K562 (cell line): ENCODE measurements at regions of chr3 and their contacts with region 1.

Region 1: DNA sequence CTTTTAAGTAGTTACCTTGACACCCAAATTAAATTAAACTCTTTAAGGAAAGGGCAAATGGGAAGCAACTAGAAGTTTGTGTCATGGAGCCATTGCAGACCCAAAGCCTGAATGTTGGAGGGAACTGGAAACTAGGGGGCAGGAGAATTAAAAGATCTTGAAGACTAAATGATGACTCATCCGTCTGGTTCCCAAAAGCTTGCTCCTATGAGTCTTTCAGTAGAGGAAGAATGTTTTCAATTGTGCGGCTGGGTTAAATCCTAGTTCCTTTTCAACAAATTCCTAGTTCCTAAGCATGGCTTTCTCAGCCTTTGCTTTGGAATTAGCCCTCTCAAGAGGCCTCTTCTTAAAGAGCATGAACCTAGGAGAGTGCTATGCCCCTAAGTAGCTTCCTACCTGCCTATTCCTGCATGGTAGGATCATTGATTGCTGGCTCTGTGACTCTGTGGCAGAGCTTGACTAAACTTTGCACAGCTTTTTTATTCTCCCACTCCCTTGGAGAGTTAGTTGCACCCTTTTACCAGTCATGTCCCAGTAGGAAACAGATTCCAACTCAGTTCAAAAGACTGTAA is 17.7 kb downstream of the CLEC3B start:
- DNase-seq: peak; percentile 47 to 82 (median 68)
- ATAC-seq: peak; percentile 64
- H3K4me3 ChIP-seq: no peak overlapping the region
- H3K27ac ChIP-seq: peak overlapping the region; percentile 12; the same call in 1 of the 3 replicates
- H3K4me1 ChIP-seq: peaks cover 8 to 45% of the 10 kb centered on the region in 2 experiments; a peak in 4 of 5 replicates
- H3K27me3 ChIP-seq: no peaks in the 10 kb centered on the region
- CTCF ChIP-seq: peak; percentile 27 to 69 (median 34); a peak in 4 of 6 replicates
- EP300 ChIP-seq: peak; percentile 49; the same call in 1 of the 2 replicates
- POLR2A ChIP-seq: no peak
- RAD21 ChIP-seq: peak; percentile 52 to 81; a peak in 3 of 4 replicates

Region 2: DNA sequence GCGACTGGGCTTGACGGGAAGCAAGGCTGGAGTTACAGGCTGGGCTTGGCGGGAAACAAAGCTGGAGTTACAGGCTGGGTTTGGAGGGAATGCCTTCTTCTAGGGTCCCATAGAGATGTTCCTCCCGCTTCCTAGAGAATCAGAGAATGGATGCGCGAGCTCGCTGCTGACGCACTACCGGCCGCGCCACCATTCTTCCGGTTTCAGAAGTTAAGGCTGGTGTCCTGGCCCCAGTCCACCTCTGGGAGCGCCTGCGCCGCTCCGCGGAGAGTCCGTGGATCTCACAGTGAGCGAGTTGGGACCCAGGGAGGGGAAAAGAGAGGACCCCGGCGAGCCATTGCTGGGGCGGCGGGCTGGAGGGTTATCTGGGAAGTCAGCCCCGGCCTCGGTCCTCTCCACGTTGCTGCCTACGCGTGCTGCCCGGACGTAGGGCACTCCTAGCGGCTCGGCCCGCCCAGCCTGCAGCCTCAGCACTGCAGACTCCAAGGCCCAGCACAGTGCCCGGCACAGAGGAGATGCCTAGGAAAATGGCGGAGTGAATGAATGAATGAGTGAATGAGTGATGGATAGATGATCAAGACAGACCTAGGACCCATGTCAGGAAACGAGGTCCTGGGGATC is 331.2 kb before region 1 on chr3 and contains the start of gene ZNF502:
- CTCF ChIA-PET with region 1: no interaction called
- POLR2A ChIA-PET with region 1: no interaction called
- in situ Hi-C with region 1: no loop called
- intact Hi-C with region 1: no loop called
- DNase-seq: peak; percentile 44 to 76 (median 64)
- ATAC-seq: peak; percentile 99
- H3K4me3 ChIP-seq: peak within 1 kb of the TSS; percentile 46
- H3K27ac ChIP-seq: no peak within 1 kb of the TSS; the same call in 2 of the 3 replicates
- H3K4me1 ChIP-seq: peaks cover 0 to 7% of the 10 kb centered on the region in 2 experiments; a peak in 1 of 5 replicates
- H3K27me3 ChIP-seq: peaks cover 14 to 25% of the 10 kb centered on the region in 2 experiments; a peak in 4 of 5 replicates
- CTCF ChIP-seq: peak; percentile 30 to 44 (median 34); a peak in 5 of 6 replicates
- EP300 ChIP-seq: no peak
- POLR2A ChIP-seq: no peak
- RAD21 ChIP-seq: no peak
- polyA plus RNA-seq, gene ZNF502: 0.38 to 0.67 TPM

Region 3: DNA sequence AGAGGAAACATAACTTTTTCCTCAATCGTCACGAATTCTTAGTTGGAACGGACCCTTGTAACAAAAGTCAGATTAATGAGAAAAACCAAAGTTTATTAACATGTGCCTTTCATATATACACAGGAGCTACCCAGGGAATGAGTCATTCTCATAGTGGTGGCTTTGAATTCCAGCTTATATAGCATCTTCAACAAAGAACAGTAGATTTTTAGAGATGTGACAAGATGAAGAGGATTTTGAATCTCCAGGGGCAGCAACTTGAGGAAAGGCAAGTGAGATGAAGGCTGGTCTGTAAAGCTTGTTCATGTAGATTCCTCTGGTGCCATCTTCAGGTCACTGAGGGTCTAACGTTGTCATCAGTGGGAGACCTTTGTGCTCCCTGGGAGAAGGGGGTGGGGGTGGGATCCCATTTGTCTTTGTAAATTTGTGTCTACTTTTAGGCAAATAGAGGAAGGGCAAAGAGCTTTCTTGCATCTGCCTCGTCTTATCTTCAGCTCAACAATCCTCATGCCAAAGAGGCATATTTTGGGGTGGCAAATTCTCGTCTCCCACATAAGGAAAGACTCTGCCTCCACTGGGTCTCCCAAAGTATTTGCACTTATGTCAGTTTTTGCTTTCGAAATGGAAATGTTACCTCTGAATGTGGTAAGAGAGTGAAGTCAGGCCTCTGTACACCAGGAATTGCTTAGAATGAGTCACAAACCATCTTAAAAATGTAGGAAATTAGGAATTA is 11.8 kb after region 1 on chr3:
- CTCF ChIA-PET with region 1: no interaction called
- POLR2A ChIA-PET with region 1: interaction called, 32 read pairs
- in situ Hi-C with region 1: no loop called
- intact Hi-C with region 1: loop called (anchors 1 kb)
- DNase-seq: peak; percentile 58 to 89 (median 68)
- ATAC-seq: peak; percentile 82
- H3K4me3 ChIP-seq: no peak overlapping the region
- H3K27ac ChIP-seq: peak overlapping the region; percentile 32; the same call in 2 of the 3 replicates
- H3K4me1 ChIP-seq: peaks cover 21 to 74% of the 10 kb centered on the region in 2 experiments
- H3K27me3 ChIP-seq: no peaks in the 10 kb centered on the region
- CTCF ChIP-seq: peak; percentile 64 to 82 (median 73); a peak in 5 of 6 replicates
- EP300 ChIP-seq: no peak
- POLR2A ChIP-seq: no peak
- RAD21 ChIP-seq: peak; percentile 72 to 79

Region 4: GRCh38 chr3:45092132-45093031 is 48.6 kb after region 1 on chr3:
- CTCF ChIA-PET with region 1: interaction called, 3 read pairs
- POLR2A ChIA-PET with region 1: interaction called, 5 read pairs
- in situ Hi-C with region 1: no loop called
- intact Hi-C with region 1: loop called (anchors 1 kb)
- DNase-seq: peak; percentile 61 to 95 (median 77)
- ATAC-seq: peak; percentile 85
- H3K4me3 ChIP-seq: no peak overlapping the region
- H3K27ac ChIP-seq: peak overlapping the region; percentile 72
- H3K4me1 ChIP-seq: peaks cover 28 to 57% of the 10 kb centered on the region in 2 experiments
- H3K27me3 ChIP-seq: no peaks in the 10 kb centered on the region
- CTCF ChIP-seq: peak in 2 of 3 experiments; percentile 40 to 70; a peak in 4 of 6 replicates
- EP300 ChIP-seq: peak; percentile 96
- POLR2A ChIP-seq: no peak
- RAD21 ChIP-seq: peak; percentile 71 to 80

Region 5: DNA sequence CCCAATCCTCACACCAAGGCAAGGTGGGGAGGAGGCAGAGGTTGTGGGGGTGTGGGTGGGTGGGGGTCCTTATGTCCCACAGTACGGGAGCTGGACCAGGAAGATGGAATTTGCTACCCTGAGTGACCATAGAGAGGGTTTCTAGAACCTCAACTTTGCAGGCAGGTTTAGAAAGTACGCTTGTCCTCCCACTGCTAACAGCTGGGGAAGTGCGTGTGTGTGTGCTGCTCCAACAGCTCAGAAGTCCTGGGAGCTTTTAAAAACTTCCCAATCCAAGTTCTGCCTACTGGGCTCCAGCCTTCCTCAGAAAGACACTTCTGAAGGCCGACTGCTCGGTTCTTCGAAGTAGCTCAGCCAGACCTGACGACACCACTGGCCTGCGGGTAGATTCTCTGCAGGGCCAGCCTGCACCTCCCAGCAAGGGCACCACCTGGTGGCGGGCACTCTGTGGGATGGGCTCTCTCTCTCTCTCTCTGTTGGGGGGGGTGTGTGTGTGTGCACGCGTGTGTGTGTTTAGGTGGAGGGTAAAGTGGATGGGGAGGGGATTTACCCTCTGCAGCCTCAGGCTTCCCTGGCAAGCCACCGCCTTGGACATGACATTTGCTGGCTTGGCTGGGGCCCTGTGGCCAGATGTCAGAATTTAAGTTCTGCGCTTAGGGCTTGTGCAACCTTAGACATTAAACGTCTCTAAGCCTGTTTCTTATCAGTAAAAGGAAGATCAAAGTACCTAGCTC is 166.7 kb after region 1 on chr3:
- CTCF ChIA-PET with region 1: interaction called, 94 read pairs
- POLR2A ChIA-PET with region 1: interaction called, 24 read pairs
- in situ Hi-C with region 1: loop called (anchors 5 kb)
- intact Hi-C with region 1: loop called (anchors 1 kb)
- DNase-seq: peak; percentile 81 to 88 (median 84)
- ATAC-seq: peak; percentile 99
- H3K4me3 ChIP-seq: no peak overlapping the region
- H3K27ac ChIP-seq: no peak overlapping the region
- H3K4me1 ChIP-seq: peaks cover 4 to 11% of the 10 kb centered on the region in 2 experiments; a peak in 3 of 5 replicates
- H3K27me3 ChIP-seq: no peaks in the 10 kb centered on the region
- CTCF ChIP-seq: peak; percentile 96 to 97 (median 96)
- EP300 ChIP-seq: peak; percentile 26; the same call in 1 of the 2 replicates
- POLR2A ChIP-seq: no peak
- RAD21 ChIP-seq: peak; percentile 96 to 98

Region 6: GRCh38 chr3:45218578-45219390 is 175.0 kb after region 1 on chr3:
- CTCF ChIA-PET with region 1: interaction called, 94 read pairs
- POLR2A ChIA-PET with region 1: interaction called, 4 read pairs
- in situ Hi-C with region 1: loop called (anchors 5 kb)
- intact Hi-C with region 1: no loop called
- DNase-seq: peak in 2 of 4 experiments; percentile 44 to 71
- ATAC-seq: peak; percentile 66
- H3K4me3 ChIP-seq: no peak overlapping the region
- H3K27ac ChIP-seq: no peak overlapping the region
- H3K4me1 ChIP-seq: peaks cover 4 to 11% of the 10 kb centered on the region in 2 experiments; a peak in 3 of 5 replicates
- H3K27me3 ChIP-seq: no peaks in the 10 kb centered on the region
- CTCF ChIP-seq: no peak
- EP300 ChIP-seq: no peak
- POLR2A ChIP-seq: no peak
- RAD21 ChIP-seq: no peak

Region 7: GRCh38 chr3:45224824-45225464 is 181.1 kb after region 1 on chr3:
- CTCF ChIA-PET with region 1: interaction called, 11 read pairs
- POLR2A ChIA-PET with region 1: interaction called, 4 read pairs
- in situ Hi-C with region 1: no loop called
- intact Hi-C with region 1: no loop called
- DNase-seq: peak; percentile 75 to 89 (median 78)
- ATAC-seq: peak; percentile 84
- H3K4me3 ChIP-seq: peak overlapping the region; percentile 65
- H3K27ac ChIP-seq: peak overlapping the region; percentile 43; the same call in 2 of the 3 replicates
- H3K4me1 ChIP-seq: peaks cover 18 to 19% of the 10 kb centered on the region in 2 experiments; a peak in 4 of 5 replicates
- H3K27me3 ChIP-seq: peaks cover 9 to 23% of the 10 kb centered on the region in 2 experiments; a peak in 4 of 5 replicates
- CTCF ChIP-seq: peak; percentile 68 to 89 (median 89)
- EP300 ChIP-seq: no peak
- POLR2A ChIP-seq: no peak
- RAD21 ChIP-seq: peak; percentile 94 to 96

Region 8: DNA sequence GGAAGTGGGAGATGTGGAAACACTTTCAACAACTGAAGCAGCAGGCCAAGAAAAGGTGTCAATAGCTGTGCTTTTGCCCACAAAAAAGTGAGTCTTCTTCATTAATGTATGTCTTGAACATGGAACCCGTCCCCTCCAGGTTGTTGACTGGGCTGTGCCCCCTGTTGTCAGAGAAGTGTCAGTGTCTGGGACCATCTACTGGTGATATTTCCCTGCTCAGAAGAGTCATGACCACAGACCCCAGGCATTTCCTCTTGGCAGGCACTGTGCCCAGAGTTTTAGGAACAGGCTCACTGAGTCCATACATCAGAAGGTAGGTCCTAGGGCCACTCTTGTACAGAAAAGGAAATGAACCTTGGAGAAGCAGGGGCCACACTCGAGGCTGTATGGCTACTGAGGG is 289.7 kb after region 1 on chr3:
- CTCF ChIA-PET with region 1: interaction called, 4 read pairs
- POLR2A ChIA-PET with region 1: interaction called, 5 read pairs
- in situ Hi-C with region 1: loop called (anchors 5 kb)
- intact Hi-C with region 1: loop called (anchors 2 kb)
- DNase-seq: peak in 2 of 4 experiments; percentile 41 to 49
- ATAC-seq: peak; percentile 81
- H3K4me3 ChIP-seq: no peak overlapping the region
- H3K27ac ChIP-seq: no peak overlapping the region
- H3K4me1 ChIP-seq: peaks cover 0 to 2% of the 10 kb centered on the region in 2 experiments; a peak in 2 of 5 replicates
- H3K27me3 ChIP-seq: peaks cover 47 to 72% of the 10 kb centered on the region in 2 experiments
- CTCF ChIP-seq: peak; percentile 49 to 62 (median 55)
- EP300 ChIP-seq: no peak
- POLR2A ChIP-seq: no peak
- RAD21 ChIP-seq: peak; percentile 24 to 63; a peak in 2 of 4 replicates